HCT116 (cell line): ENCODE measurements at regions of chrX and their contacts with region 1.

Region 1: DNA sequence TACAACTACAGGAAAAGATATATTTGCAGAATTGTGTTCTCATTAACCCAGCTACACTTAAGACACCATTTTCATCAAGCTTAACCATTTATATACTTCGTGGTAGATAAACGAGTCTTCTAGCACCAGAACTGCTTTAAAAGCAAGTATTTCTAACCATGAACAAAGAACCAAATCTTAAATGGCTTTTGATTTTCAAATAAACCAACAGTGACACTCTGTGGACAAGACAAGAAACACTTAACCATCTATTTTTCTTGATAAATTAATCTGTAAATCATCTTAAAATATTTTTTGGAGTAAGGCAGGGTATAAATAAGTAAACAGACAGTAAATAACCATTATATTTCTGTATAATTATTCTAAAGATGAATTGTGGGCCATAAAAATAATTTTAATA is 10.2 kb downstream of the BEND2 start:
- DNase-seq: no peak
- ATAC-seq: no peak
- H3K4me3 ChIP-seq: no peak overlapping the region
- H3K27ac ChIP-seq: no peak overlapping the region
- H3K4me1 ChIP-seq: no peaks in the 10 kb centered on the region
- H3K27me3 ChIP-seq: no peaks in the 10 kb centered on the region
- CTCF ChIP-seq: no peak; a peak in 1 of 6 replicates
- POLR2A ChIP-seq: no peak
- RAD21 ChIP-seq: peak; percentile 44

Region 2: DNA sequence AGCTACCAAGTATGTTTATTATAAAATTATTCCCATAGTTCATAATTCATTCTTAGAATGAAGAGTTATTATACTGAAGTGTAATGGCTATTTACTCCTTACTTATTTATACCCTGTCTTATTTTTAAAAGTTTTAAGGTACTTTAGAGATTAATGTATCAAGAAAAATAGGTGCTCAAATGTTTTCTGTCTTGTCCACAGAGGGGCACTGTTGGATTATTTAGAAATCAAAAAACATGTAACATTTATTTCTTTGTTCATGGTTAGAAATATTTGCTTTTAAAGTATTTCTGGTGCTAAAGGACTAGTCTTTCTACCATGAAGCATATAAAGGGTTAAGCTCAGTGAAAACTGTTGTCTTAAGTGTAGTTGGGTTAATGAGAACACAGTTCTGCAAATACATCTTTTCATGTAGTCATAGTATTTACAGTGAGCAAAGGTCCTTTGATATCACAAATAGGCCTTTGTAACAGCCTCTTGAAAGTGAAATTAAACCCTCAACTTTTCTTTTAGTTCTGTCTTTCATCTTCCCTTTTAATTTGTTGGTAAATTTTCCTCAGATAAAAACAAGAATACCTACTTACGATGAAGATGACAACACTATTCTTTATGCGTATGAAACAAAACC is 465.5 kb before region 1 on chrX:
- CTCF ChIA-PET with region 1: no interaction called
- POLR2A ChIA-PET with region 1: no interaction called
- RAD21 ChIA-PET with region 1: no interaction called
- intact Hi-C with region 1: loop called (anchors 1 kb)
- DNase-seq: no peak
- ATAC-seq: no peak
- H3K4me3 ChIP-seq: no peak overlapping the region
- H3K27ac ChIP-seq: no peak overlapping the region
- H3K4me1 ChIP-seq: no peaks in the 10 kb centered on the region
- H3K27me3 ChIP-seq: no peaks in the 10 kb centered on the region
- CTCF ChIP-seq: peak; percentile 17 to 44 (median 24); a peak in 3 of 6 replicates
- POLR2A ChIP-seq: no peak
- RAD21 ChIP-seq: peak; percentile 51

Region 3: GRCh38 chrX:17812763-17813162 is 397.7 kb before region 1 on chrX:
- CTCF ChIA-PET with region 1: no interaction called
- POLR2A ChIA-PET with region 1: no interaction called
- RAD21 ChIA-PET with region 1: no interaction called
- intact Hi-C with region 1: loop called (anchors 10 kb)
- DNase-seq: no peak
- ATAC-seq: no peak
- H3K4me3 ChIP-seq: no peak overlapping the region
- H3K27ac ChIP-seq: no peak overlapping the region
- H3K4me1 ChIP-seq: peaks cover 4 to 5% of the 10 kb centered on the region in 2 experiments; a peak in 1 of 4 replicates
- H3K27me3 ChIP-seq: no peaks in the 10 kb centered on the region
- CTCF ChIP-seq: peak; percentile 31 to 64 (median 62); a peak in 5 of 6 replicates
- POLR2A ChIP-seq: no peak
- RAD21 ChIP-seq: peak; percentile 45

Region 4: DNA sequence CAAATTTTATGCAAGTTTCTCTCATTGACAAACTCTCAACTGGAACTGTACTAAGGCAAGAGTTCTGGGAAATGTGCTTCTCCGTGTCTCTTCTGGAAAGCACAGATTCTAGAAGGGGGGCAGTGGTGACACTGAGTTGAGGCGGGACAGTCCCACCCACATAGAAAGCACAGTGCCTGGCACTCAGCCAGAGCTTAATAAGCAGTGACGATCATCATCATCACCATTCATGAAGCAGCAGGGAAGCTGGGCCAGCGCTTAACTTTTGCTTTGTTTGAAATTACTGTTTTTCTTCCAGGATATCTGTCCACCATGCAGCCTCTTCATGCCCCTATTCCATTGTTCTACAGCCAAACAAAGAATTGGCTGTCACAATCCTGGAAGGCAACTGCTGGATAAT is 50.1 kb before region 1 on chrX:
- CTCF ChIA-PET with region 1: no interaction called
- POLR2A ChIA-PET with region 1: no interaction called
- RAD21 ChIA-PET with region 1: no interaction called
- intact Hi-C with region 1: no loop called
- DNase-seq: no peak
- ATAC-seq: no peak
- H3K4me3 ChIP-seq: no peak overlapping the region
- H3K27ac ChIP-seq: no peak overlapping the region
- H3K4me1 ChIP-seq: no peaks in the 10 kb centered on the region
- H3K27me3 ChIP-seq: no peaks in the 10 kb centered on the region; the same call in 1 of the 2 replicates
- CTCF ChIP-seq: no peak
- POLR2A ChIP-seq: no peak
- RAD21 ChIP-seq: no peak